AG04450 (cell line): ENCODE measurements at regions of chr7 and their contacts with region 1.

Region 1: DNA sequence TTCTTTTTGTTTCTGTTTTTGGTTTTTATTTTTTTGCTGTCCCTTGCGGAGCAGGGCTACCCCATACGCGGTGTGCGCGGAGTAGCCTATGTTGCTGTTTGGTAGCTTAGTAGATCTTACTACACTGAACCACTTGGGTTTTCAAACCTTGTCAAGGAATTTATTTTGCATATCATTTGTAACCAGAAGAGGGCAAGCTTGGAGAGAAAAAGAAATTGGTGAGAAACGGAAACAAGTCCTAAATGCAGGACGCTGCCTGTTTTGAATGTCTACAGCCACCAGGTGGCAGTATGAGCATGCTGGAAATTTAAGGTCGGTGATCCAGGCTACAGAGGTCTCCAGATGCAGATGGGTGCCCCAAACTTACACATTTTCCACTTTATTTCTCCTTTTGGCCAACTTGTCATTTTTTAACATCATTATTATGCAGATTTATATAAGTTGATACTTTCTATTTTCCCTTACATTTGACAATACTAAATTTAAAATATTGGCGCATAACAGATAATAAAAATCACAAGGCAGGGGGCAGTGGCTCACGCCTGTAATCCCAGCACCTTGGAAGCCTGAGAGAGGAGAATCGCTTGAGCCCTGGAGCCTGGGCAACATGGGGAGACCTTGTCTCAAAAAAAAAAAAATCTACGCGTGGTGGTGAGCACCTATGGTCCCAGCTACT is 15.3 kb upstream of the TRA2A start:
- DNase-seq: peak; percentile 89
- H3K4me3 ChIP-seq: no peak overlapping the region
- H3K27ac ChIP-seq: no peak overlapping the region
- H3K27me3 ChIP-seq: peaks cover 3% of the 10 kb centered on the region
- CTCF ChIP-seq: peak; percentile 97

Region 2: DNA sequence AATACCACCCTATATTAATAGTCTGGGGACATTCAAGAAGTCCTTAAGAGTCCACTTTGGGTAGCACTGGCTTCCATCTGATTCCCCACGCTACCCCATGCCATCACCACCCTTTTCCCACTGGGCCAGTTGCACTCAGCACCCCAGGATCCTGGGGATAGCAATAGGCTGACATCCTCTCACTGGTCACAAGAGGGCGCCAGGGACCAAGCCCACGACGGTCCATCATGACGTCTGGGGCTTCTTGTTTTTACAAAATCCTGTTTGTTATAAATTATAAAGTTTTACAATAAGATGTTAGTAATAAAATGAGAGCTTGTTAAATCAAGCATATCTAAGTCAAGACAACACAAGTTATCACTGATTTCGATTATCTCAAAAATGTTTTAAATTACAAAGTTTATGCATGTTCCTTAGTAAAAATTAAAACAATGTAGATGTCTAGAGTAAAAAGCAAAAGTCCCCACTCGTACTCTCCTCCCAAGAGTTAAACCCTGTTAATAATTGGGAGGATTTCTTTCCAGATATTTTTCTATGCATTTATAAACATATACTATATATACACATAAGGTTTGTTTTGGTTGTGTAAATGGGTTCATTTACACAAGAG is 285.1 kb before region 1 on chr7:
- CTCF ChIA-PET with region 1: interaction called, 12 read pairs
- POLR2A ChIA-PET with region 1: no interaction called
- DNase-seq: peak; percentile 33
- H3K4me3 ChIP-seq: no peak overlapping the region
- H3K27ac ChIP-seq: no peak overlapping the region
- H3K27me3 ChIP-seq: peaks cover 15% of the 10 kb centered on the region
- CTCF ChIP-seq: peak; percentile 96

Region 3: DNA sequence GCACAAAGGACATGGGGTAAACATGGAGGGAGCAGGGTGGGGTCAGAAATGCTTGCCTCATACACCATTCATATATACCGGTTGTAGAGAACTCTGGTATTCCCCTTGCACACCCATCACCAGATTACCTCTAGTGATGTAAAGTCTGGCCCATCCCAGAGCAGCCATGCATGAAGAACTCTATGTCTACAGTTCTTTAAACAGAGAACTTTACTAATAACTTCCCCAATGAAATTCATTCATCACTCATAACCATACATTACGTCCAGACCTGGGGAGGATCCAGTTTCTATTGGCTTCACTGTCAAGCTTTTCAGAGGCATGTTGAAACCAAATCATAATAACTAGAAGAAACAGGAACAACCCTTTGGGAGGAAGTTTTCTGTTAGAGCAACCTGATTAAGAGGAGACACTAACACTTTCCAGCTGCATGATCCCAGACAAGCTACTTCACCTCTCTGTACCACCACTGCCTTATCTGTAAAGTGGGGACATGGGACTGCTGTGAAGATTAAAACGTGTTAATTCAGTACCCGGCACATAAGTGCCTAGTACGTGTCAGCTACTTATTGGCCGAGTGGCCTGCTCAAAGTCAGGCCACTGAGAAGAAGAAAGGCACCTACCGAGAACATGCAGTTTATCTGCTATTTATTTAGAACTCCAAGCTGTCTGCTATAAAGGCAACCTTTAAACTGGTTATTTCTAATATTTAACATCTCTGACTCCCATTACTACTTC is 136.4 kb before region 1 on chr7:
- CTCF ChIA-PET with region 1: no interaction called
- POLR2A ChIA-PET with region 1: no interaction called
- DNase-seq: no peak
- H3K4me3 ChIP-seq: no peak overlapping the region
- H3K27ac ChIP-seq: no peak overlapping the region
- H3K27me3 ChIP-seq: no peaks in the 10 kb centered on the region
- CTCF ChIP-seq: no peak

Region 4: DNA sequence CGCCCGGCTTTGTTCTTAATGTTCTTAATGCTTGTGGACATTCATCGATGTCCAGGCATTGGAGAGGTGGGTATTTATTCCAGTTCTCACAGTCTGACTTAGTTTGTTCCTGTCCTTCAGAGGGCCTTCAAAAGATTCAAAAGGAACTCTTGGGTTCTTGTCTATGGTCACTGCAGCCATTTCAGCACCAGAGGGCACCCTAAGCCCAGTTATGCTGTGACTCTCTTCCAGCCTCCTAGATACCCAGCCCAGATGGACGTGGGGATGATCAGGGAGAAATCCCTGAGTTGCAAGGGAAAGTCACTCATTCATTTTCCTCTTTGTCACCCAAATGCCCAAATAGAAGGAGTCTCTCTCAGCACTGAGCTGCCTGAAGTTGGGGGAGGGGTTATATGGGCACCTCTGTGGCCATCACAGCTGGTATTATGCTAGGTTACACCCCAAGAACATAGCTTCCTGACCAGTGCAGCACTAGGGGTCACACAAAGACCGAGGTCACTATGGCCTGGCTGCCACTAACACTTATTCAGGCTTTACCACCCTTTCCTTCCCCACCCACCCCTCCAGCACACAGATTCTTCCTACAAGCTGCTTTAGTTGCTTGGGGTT is 23.7 kb after region 1 on chr7:
- CTCF ChIA-PET with region 1: interaction called, 17 read pairs
- POLR2A ChIA-PET with region 1: no interaction called
- DNase-seq: peak; percentile 44
- H3K4me3 ChIP-seq: no peak overlapping the region
- H3K27ac ChIP-seq: no peak overlapping the region
- H3K27me3 ChIP-seq: no peaks in the 10 kb centered on the region
- CTCF ChIP-seq: peak; percentile 95

Region 5: GRCh38 chr7:23679898-23680413 is 132.9 kb after region 1 on chr7 and contains the start of gene FAM221A:
- CTCF ChIA-PET with region 1: interaction called, 10 read pairs
- POLR2A ChIA-PET with region 1: no interaction called
- DNase-seq: peak; percentile 47
- H3K4me3 ChIP-seq: peak within 1 kb of the TSS; percentile 68
- H3K27ac ChIP-seq: peak within 1 kb of the TSS; percentile 31
- H3K27me3 ChIP-seq: no peaks in the 10 kb centered on the region
- CTCF ChIP-seq: peak; percentile 70
- polyA plus RNA-seq, gene FAM221A: 3.1 and 3.5 TPM in 2 replicates

Region 6: GRCh38 chr7:23712368-23713284 is 165.6 kb after region 1 on chr7:
- CTCF ChIA-PET with region 1: interaction called, 62 read pairs
- POLR2A ChIA-PET with region 1: no interaction called
- DNase-seq: peak; percentile 29
- H3K4me3 ChIP-seq: no peak overlapping the region
- H3K27ac ChIP-seq: no peak overlapping the region
- H3K27me3 ChIP-seq: no peaks in the 10 kb centered on the region
- CTCF ChIP-seq: peak; percentile 57